Activated CD8-positive, alpha-beta memory T cell treated with anti-CD3 and anti-CD28 coated beads, Interleukin-2, amount 10 ng/mL, durations not matched to agents 7 days and 5 days (primary cell): ENCODE measurements at regions of chr5 and their contacts with region 1.

Region 1: DNA sequence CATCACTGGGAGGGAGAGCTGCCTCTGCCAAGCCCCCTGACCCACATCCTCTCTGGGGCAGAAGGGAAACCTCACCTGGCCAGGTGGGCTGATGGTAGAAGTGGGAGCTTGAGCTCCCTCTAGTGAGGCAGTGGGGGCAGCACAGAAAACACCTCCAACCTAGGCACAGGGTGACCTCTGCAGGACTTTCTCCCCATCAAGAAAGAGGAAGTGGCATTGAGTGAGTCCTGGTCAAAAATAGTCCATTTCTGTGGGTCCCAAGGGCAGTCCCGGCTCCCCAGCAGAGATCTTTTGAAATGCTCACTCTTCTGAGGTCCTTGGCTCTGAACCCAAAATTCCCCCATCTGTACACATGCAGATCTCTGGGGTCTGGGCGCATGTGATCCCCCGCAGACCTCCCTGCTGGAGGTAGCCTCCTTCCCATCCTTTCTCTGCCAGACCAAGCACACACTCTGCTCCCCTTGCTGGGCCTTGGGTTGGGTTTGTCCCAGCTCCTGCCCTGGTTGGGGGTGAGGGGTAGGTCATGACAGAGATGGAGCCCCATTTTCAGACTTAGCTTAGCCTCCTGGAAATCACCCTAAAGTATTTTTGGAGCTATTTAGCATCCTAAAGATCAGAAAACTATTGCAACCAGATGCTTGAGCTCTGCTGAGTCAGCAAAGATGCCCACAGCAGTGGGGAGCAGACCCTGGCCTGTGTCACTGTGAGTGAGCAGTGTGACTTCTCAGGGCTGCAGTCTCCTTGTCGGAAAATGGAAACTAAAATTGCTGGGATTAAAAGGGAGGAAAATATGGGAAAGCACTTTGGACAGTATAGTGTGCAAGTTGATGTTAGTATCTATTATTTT is 41.6 kb upstream of the LCP2 start:
- DNase-seq: peak; percentile 82
- ATAC-seq: peak; percentile 76
- H3K4me3 Mint-ChIP-seq: no peak overlapping the region
- H3K27ac Mint-ChIP-seq: no peak overlapping the region
- H3K4me1 Mint-ChIP-seq: peaks cover 36% of the 10 kb centered on the region
- H3K27me3 Mint-ChIP-seq: no peaks in the 10 kb centered on the region

Region 2: GRCh38 chr5:170225326-170226128 is 113.6 kb before region 1 on chr5:
- CTCF ChIA-PET with region 1: interaction called, 205 read pairs
- DNase-seq: peak; percentile 86
- ATAC-seq: peak; percentile 77
- H3K4me3 Mint-ChIP-seq: no peak overlapping the region
- H3K27ac Mint-ChIP-seq: no peak overlapping the region
- H3K4me1 Mint-ChIP-seq: peaks cover 3% of the 10 kb centered on the region
- H3K27me3 Mint-ChIP-seq: no peaks in the 10 kb centered on the region

Region 3: DNA sequence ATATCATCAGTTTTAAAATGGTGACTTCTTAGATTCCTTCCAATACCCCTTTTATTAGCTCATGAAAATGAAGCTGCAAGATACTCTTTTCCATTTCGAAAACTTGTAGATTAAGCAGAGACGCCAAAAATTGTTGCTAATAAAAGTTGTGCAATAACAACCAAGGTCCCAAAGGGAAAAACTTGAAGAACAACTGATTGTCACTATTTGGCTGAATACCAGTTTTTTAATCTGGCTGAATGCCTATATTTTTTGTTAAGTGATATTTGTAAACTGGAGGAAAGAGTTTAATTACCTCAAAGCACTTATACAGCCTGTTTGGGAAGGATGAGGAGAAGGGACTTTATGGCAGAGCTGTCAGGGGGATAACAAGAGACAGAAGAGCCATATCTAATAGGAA is 91.8 kb before region 1 on chr5:
- CTCF ChIA-PET with region 1: interaction called, 13 read pairs
- DNase-seq: no peak
- ATAC-seq: no peak
- H3K4me3 Mint-ChIP-seq: no peak overlapping the region
- H3K27ac Mint-ChIP-seq: no peak overlapping the region
- H3K4me1 Mint-ChIP-seq: peaks cover 29% of the 10 kb centered on the region
- H3K27me3 Mint-ChIP-seq: no peaks in the 10 kb centered on the region

Region 4: DNA sequence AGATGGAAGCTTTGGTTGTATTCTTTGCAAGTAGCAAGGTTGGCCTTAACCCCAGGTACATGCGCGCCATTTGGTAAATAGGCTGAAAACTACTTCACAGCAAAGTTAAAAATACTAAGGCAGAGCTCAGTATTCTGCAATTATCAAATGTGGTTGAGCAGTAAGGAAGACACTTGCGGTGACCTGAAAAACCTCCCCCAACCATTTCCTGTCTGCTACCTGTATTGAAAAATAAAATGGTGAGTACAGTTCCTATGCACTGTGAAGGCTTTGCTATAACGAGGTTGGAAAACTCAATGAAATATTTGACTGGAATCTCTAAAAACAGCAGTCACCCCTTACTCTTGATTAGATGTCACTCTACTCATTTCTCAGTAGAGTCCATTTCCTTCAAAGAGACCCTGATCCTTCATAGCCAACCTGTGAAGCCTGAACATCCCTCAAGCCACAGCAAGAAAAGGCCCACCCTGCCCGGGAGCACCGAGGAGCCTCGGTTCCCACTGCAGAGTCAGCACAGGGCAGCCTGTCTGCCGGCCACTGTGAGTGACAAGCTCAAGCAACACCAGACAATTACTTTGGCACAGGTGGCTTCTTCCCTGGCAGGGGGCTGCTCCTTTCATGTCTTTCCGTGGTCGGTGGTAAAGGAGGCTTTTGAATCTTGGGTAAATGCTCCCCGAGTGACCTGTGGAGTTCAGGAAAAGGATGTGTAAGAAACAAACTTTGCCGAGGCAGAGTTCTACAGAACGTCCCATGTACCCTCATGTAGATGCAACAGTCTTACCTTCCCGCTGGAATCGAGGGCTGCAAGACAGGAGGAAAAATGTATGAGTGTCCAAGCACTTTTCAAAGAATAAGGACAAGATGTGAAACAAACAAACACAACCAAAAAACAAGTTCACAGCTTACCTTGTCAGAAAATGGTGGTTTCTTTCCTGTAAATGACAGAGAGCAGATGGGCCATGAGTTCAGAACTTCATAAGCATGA is 76.8 kb before region 1 on chr5:
- CTCF ChIA-PET with region 1: interaction called, 110 read pairs
- DNase-seq: peak; percentile 84
- ATAC-seq: peak; percentile 56
- H3K4me3 Mint-ChIP-seq: peak overlapping the region; percentile 38
- H3K27ac Mint-ChIP-seq: peak overlapping the region; percentile 89
- H3K4me1 Mint-ChIP-seq: peaks cover 93% of the 10 kb centered on the region
- H3K27me3 Mint-ChIP-seq: no peaks in the 10 kb centered on the region

Region 5: GRCh38 chr5:170278611-170279452 is 60.3 kb before region 1 on chr5:
- CTCF ChIA-PET with region 1: interaction called, 122 read pairs
- DNase-seq: peak; percentile 98
- ATAC-seq: peak; percentile 76
- H3K4me3 Mint-ChIP-seq: peak overlapping the region; percentile 65
- H3K27ac Mint-ChIP-seq: peak overlapping the region; percentile 88
- H3K4me1 Mint-ChIP-seq: peaks cover 92% of the 10 kb centered on the region
- H3K27me3 Mint-ChIP-seq: no peaks in the 10 kb centered on the region

Region 6: GRCh38 chr5:170302653-170303501 is 36.3 kb before region 1 on chr5:
- CTCF ChIA-PET with region 1: interaction called, 234 read pairs
- DNase-seq: peak; percentile 71
- ATAC-seq: peak; percentile 94
- H3K4me3 Mint-ChIP-seq: peak overlapping the region; percentile 62
- H3K27ac Mint-ChIP-seq: peak overlapping the region; percentile 94
- H3K4me1 Mint-ChIP-seq: peaks cover 66% of the 10 kb centered on the region
- H3K27me3 Mint-ChIP-seq: no peaks in the 10 kb centered on the region